ENCODE measurements at regions of chr15 and their contacts with region 1.

Region 1: GRCh38 chr15:80455668-80456442 is 51.7 kb downstream of the ARNT2 start:
- H3K4me3 ChIP-seq: no peak overlapping the region
- H3K27ac ChIP-seq: no peak overlapping the region
- H3K4me1 ChIP-seq: no peaks in the 10 kb centered on the region
- CTCF ChIP-seq: peak; percentile 75

Region 2: DNA sequence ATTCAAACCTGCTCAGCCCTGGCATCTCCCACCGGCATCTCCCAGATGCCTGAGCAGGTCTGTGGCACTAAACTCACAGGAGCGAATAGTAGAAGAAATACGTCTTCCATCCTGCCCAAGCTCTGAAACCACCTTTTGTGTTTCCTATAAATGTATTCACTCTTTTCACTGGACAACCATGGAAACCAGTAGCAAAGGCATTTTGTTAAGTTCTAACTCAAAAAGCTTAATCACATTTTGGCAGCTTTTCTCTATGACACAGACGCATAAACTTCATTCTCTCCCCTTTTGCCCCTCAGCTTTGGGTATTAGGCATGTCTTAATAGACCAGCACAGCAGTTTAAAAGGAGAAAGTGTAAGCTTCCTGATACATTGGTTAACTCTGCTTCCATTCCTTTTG is 76.2 kb before region 1 on chr15:
- CTCF ChIA-PET with region 1: no interaction called
- POLR2A ChIA-PET with region 1: no interaction called
- H3K4me3 ChIP-seq: no peak overlapping the region
- H3K27ac ChIP-seq: no peak overlapping the region
- H3K4me1 ChIP-seq: no peaks in the 10 kb centered on the region
- CTCF ChIP-seq: no peak

Region 3: DNA sequence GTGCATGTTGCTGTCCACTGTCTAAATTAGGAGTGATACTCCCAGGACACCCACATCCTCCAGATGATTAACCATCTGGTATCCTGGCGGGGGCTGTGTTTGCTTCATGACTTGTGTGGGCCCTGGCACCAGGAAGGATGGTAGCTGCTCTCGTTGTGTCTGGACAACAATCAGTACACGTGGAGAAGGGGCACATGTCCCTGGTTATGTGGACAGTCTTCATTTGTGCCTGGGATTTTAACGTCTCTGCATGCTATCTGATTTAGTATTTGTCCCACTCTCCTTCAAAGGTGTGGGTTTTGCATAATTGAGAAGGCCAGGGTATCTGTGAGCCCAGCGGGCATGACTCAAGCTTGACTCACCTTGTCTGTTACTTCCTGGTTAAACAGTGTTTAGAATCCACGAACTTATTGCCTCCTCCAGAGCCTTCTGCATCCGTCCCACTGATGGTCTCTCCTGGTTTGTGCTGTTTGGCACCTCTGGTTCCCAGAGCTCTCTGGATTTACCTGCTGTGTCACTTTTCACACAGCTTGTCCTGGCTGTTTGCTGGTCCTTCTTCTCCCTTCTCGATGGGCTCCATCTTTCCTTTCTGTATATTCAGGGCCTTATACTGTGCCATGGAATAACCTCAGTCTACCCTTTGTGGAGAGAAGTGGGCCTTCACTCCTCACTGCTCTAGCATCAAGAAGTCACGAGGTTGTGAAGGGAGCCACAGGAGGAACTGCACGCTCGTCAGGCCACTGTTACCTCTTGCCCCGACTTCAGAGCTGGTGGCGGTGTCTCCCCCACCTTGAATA is 19.1 kb before region 1 on chr15:
- CTCF ChIA-PET with region 1: interaction called, 10 read pairs
- POLR2A ChIA-PET with region 1: no interaction called
- H3K4me3 ChIP-seq: no peak overlapping the region
- H3K27ac ChIP-seq: no peak overlapping the region
- H3K4me1 ChIP-seq: no peaks in the 10 kb centered on the region
- CTCF ChIP-seq: no peak

Region 4: GRCh38 chr15:80475572-80475971 is 19.7 kb after region 1 on chr15:
- CTCF ChIA-PET with region 1: interaction called, 13 read pairs
- POLR2A ChIA-PET with region 1: no interaction called
- H3K4me3 ChIP-seq: no peak overlapping the region
- H3K27ac ChIP-seq: no peak overlapping the region
- H3K4me1 ChIP-seq: no peaks in the 10 kb centered on the region
- CTCF ChIP-seq: no peak

Region 5: DNA sequence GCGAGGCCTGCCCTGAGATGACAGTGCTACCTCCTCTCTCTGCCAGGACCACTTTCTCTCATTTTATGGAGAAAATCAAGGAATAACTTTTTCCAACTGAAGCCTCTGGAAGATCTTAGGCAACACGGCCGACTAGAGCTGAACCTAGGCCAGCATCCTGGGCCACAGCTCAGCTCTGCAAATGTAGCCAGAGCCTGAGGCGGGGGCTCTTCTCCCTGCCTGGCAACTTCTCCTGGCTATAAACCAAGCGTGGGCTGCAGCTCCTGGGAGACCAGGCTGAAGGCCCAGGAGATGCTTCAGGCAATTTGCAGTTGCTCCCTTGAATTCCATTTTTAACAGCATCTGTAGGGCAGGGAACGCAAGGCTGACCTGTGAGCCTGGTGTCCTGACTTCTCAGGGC is 398.2 kb after region 1 on chr15:
- CTCF ChIA-PET with region 1: interaction called, 11 read pairs
- POLR2A ChIA-PET with region 1: no interaction called
- H3K4me3 ChIP-seq: no peak overlapping the region
- H3K27ac ChIP-seq: no peak overlapping the region
- H3K4me1 ChIP-seq: no peaks in the 10 kb centered on the region
- CTCF ChIP-seq: no peak

Region 6: DNA sequence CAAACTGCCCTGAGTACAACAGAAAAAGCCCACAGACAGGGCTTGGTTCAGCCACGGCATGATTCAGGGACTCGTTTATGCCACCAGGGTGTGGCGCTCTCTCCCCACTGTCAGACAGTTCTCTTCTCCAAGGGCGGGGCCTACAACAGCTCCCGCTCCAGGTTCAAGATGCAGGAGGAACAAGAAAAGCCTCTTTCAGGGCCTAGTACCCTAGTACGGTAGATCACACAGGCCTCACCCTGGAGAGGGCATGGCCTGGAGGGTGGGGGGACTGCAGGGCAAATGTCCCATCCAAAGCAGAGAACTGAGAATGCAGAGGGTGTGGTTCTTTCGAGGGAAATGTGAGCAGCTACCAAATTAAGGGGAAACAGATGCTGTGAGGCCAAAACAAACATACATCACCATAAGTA is 521.8 kb after region 1 on chr15:
- CTCF ChIA-PET with region 1: interaction called, 10 read pairs
- POLR2A ChIA-PET with region 1: no interaction called
- H3K4me3 ChIP-seq: no peak overlapping the region
- H3K27ac ChIP-seq: no peak overlapping the region
- H3K4me1 ChIP-seq: peaks cover 14% of the 10 kb centered on the region
- CTCF ChIP-seq: peak; percentile 81